ENCODE measurements at regions of chr5 and their contacts with region 1.

Region 1: GRCh38 chr5:14664302-14665100 is at the start of gene OTULIN:
- DNase-seq: peak; percentile 96
- H3K4me3 Mint-ChIP-seq: peak within 1 kb of the TSS; percentile 96
- H3K27ac Mint-ChIP-seq: peak within 1 kb of the TSS; percentile 99
- H3K4me1 Mint-ChIP-seq: peaks cover 59% of the 10 kb centered on the region
- H3K27me3 Mint-ChIP-seq: no peaks in the 10 kb centered on the region
- total RNA-seq, gene OTULIN: 52.5 and 62.1 TPM in 2 replicates

Region 2: DNA sequence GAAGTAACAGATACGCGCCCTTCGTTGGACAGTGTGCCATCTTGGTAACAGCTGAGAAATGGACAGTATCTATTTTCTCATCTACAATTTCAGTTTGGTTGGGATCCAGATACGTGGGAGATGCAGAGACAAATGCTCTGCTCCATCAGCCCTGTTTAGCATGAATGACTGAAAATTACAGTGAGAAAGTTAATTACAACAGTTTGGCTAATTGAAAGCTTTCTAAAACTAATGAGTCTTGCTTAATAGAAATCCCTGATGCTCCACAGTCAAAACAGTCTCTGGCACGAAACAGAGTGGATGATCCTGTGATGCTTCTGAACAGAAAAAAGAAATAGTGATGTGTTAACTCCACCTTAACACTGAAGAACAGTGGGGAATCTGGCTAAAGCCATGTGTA is 860.2 kb before region 1 on chr5:
- intact Hi-C with region 1: no loop called
- DNase-seq: no peak
- H3K4me3 Mint-ChIP-seq: no peak overlapping the region
- H3K27ac Mint-ChIP-seq: no peak overlapping the region
- H3K4me1 Mint-ChIP-seq: no peaks in the 10 kb centered on the region
- H3K27me3 Mint-ChIP-seq: no peaks in the 10 kb centered on the region

Region 3: DNA sequence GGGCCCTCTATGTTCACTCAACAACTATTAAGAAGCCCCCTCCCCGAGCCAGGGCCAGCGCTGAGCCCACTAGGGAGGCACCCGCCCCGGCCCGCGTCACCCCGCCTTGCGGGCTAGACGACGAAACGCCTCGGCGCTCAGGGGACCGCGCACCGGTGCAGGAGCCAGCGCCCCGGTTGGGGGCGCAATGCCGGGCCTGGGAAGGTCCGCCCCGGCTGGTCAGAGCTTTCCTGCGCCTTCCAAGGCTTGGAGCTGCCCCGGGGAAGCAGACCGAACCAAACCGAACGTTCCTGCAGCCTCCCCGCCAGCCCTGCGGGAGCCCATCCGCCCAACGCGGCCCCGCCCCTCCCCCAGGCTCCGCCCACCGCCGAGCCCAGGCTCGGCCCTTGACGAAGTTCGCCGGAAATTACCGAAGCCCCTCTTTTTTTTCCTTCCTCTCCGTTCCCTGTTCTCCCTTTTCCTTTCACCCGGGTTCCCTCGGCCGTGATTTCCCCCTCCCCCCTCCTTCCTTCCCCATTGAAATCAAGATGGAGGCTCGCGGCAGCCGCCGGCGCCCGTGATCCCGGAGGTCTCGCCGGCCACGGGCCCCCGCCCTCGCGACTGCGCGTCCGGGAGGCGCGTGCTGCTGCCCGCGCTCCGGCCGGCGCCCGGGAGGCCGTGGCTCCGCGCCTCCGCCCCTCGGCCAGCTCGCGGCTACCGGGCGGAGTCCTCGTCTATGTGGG is 521.5 kb before region 1 on chr5 and contains the start of gene TRIO:
- intact Hi-C with region 1: loop called (anchors 10 kb)
- DNase-seq: peak; percentile 94
- H3K4me3 Mint-ChIP-seq: peak within 1 kb of the TSS; percentile 87
- H3K27ac Mint-ChIP-seq: peak within 1 kb of the TSS; percentile 68
- H3K4me1 Mint-ChIP-seq: peaks cover 10% of the 10 kb centered on the region
- H3K27me3 Mint-ChIP-seq: peaks cover 58% of the 10 kb centered on the region
- total RNA-seq, gene TRIO: 8.7 and 14.0 TPM in 2 replicates

Region 4: DNA sequence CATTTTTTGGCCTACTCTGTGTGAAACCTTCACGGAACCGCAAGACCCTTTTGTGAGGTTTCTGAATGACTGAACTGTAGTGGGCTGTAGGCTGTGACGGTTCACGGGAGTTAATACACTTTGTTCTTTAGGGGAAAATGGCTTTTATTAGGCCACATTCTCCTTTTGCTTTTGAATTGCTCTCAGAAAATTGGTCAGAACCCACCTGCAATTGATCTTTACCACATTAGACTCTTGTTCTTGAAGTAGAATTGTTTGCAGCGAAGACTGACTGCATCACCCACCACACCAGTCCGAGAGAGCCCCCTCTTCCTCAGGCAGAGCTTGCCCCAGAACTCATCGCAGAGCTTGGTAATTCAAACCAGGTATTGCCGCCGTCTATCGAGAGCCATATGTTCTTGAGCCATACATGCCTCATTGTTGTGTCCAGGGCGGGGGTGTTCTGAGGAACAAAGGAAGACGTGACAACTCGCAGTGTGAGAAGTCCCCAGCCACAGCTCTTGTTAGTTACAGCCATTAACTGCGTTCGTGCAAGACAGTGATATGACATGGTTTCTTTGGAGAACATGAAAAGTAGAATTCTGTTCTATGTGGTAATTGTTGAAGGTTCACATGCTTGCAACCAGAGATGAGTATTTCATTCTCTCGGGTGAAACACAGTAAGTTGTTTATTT is 249.3 kb before region 1 on chr5:
- intact Hi-C with region 1: loop called (anchors 5 kb)
- DNase-seq: peak; percentile 66
- H3K4me3 Mint-ChIP-seq: peak overlapping the region; percentile 64
- H3K27ac Mint-ChIP-seq: peak overlapping the region; percentile 93
- H3K4me1 Mint-ChIP-seq: peaks cover 46% of the 10 kb centered on the region
- H3K27me3 Mint-ChIP-seq: no peaks in the 10 kb centered on the region

Region 5: DNA sequence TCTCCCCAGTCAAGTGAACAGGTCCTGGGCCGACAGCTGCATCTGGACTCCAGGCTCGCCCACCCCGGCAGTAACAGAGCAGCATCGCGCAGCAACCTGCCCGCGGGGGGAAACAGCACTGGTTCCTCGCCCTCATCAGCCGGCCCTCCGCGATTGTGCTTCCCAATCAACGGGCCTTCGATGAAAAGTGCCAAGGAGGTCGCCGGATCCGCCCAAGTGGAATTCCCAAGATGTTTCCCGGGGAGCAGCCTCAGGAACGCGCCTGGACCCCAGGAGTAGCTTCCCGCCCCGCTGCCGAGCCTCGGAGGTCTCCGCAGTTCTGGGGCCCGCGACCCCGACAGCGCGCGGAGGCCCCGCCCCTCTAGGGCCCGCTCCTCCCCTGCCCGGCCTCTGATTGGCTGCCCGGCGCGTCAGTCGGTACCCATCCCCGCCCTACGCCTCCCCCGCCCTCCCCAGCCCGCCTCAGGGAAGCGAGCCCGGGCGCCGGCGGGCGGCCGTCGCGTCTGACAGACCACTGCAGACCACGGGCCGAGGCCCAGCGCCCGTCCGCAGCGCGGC is 83.1 kb before region 1 on chr5 and contains the start of gene OTULINL:
- intact Hi-C with region 1: loop called (anchors 1 kb)
- DNase-seq: peak; percentile 95
- H3K4me3 Mint-ChIP-seq: peak within 1 kb of the TSS; percentile 83
- H3K27ac Mint-ChIP-seq: peak within 1 kb of the TSS; percentile 69
- H3K4me1 Mint-ChIP-seq: peaks cover 31% of the 10 kb centered on the region
- H3K27me3 Mint-ChIP-seq: peaks cover 16% of the 10 kb centered on the region
- total RNA-seq, gene OTULINL: 9.4 and 11.4 TPM in 2 replicates

Region 6: GRCh38 chr5:14675865-14676300 is 11.4 kb after region 1 on chr5:
- intact Hi-C with region 1: loop called (anchors 1 kb)
- DNase-seq: peak; percentile 59
- H3K4me3 Mint-ChIP-seq: peak overlapping the region; percentile 73
- H3K27ac Mint-ChIP-seq: peak overlapping the region; percentile 84
- H3K4me1 Mint-ChIP-seq: peaks cover 62% of the 10 kb centered on the region
- H3K27me3 Mint-ChIP-seq: no peaks in the 10 kb centered on the region

Region 7: DNA sequence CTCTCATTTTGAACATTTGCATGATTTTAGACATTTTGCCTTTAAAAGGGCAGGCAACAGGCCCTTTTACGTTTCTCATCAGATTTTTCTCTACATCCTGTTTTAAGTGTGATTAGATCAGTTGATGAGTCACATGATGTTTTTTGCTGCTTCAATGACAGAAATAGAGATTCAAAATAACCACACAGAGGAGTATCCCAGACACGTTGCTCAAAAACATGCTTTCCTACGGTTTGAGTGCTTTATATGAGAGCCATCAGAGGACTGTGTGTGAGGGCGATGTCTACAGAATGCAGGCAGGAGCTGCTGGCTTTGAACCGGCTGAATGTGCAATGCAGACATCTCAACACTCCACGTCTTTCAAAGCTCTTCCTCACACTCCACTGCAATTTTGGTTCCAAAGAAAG is 42.1 kb after region 1 on chr5:
- intact Hi-C with region 1: loop called (anchors 1 kb)
- DNase-seq: peak; percentile 87
- H3K4me3 Mint-ChIP-seq: peak overlapping the region; percentile 82
- H3K27ac Mint-ChIP-seq: peak overlapping the region; percentile 99
- H3K4me1 Mint-ChIP-seq: peaks cover 69% of the 10 kb centered on the region
- H3K27me3 Mint-ChIP-seq: no peaks in the 10 kb centered on the region

Region 8: GRCh38 chr5:16456103-16456832 is 1791.8 kb after region 1 on chr5:
- intact Hi-C with region 1: loop called (anchors 5 kb)
- DNase-seq: peak; percentile 80
- H3K4me3 Mint-ChIP-seq: peak overlapping the region; percentile 71
- H3K27ac Mint-ChIP-seq: peak overlapping the region; percentile 90
- H3K4me1 Mint-ChIP-seq: peaks cover 47% of the 10 kb centered on the region
- H3K27me3 Mint-ChIP-seq: no peaks in the 10 kb centered on the region